ENCODE measurements at regions of chr7 and their contacts with region 1.

Region 1: DNA sequence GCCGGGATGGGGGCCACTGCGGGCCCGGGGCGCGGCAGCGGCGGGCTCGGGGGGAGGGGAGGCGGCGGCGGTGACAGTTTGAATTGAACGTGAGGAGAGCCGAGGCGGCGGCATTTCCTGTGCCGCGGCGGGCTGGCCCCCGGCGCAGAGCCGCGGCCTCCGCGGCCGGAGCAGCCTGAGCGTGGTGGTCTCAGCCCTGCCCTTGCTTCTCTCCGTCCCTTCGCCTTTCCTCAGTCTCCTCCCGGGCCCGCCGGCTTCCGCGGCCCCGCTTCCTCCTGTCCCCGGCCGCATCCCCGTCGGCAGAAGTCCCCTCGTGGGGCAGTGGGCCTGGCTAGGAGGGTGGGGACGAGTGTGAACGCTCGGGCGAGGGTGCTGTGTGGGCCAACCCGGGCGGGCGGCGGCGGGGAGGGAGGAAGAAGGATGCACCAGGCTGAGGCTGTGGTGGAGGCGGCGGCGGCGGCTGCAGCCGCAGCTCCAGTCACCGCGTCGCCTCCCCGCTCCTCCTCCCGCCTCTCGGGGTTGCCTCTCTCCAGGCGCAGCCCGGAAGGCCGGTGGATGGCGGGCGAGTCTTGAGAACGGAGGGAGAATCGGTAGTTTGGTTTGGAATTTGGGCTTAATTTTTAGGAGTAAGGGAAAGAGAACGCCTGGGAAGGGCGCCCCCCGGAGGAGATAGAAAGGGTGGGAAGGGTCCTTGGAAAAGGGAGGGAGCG is 690 bp downstream of the SEPTIN7 start:
- DNase-seq: peak; percentile 75 to 85
- ATAC-seq: peak; percentile 40 to 56 (median 44)
- H3K4me3 ChIP-seq: peak overlapping the region; percentile 79
- H3K27ac ChIP-seq: peak overlapping the region; percentile 92
- H3K4me1 ChIP-seq: peaks cover 35% of the 10 kb centered on the region
- H3K27me3 ChIP-seq: no peaks in the 10 kb centered on the region
- CTCF ChIP-seq: peak; percentile 45

Region 2: DNA sequence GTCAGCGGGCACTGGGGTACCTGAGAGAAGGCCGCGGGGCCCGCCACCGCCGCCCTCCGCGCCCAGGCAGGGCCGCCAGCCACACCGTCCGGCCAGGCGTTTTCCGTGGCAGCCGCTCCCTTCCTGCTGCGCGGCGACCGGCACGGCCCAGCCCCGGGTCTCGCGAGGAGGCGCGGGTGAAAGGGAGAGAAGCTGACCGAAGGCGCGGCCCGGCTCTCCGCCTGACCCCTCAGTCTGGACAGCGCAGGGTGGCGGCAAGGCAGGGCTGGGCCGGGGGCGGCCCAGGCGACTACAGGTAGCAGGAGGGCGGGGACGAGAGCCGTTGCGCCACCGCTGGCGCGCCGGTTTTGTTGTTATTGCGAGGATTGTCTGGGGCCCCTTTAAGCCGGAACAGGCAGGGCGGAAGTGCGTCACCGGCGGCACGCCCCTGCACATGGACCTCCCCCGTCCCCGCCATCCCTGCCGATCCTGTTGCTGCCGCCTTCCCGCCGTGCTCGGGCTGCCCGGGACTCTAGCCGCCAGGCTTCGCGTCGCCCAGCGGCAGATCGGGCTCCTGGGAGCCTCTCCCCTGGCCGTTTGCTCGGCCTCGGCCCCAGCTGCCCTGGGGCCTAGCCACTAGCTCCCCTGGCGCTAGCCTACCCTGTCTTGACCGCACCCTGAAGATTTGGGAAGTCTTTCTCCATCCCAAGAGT is 106.6 kb before region 1 on chr7 and contains the start of gene HERPUD2:
- intact Hi-C with region 1: no loop called
- DNase-seq: peak; percentile 92 to 96
- ATAC-seq: peak; percentile 96 to 97 (median 97)
- H3K4me3 ChIP-seq: peak within 1 kb of the TSS; percentile 96
- H3K27ac ChIP-seq: peak within 1 kb of the TSS; percentile 96
- H3K4me1 ChIP-seq: peaks cover 32% of the 10 kb centered on the region
- H3K27me3 ChIP-seq: no peaks in the 10 kb centered on the region
- CTCF ChIP-seq: no peak
- total RNA-seq, gene HERPUD2: 12.5 to 21.5 (median 16.4) TPM

Region 3: GRCh38 chr7:35707422-35707821 is 94.1 kb before region 1 on chr7:
- intact Hi-C with region 1: loop called in 1 of 2 experiments (anchors 2 kb)
- DNase-seq: no peak
- ATAC-seq: no peak
- H3K4me3 ChIP-seq: no peak overlapping the region
- H3K27ac ChIP-seq: no peak overlapping the region
- H3K4me1 ChIP-seq: peaks cover 6% of the 10 kb centered on the region
- H3K27me3 ChIP-seq: no peaks in the 10 kb centered on the region
- CTCF ChIP-seq: no peak

Region 4: DNA sequence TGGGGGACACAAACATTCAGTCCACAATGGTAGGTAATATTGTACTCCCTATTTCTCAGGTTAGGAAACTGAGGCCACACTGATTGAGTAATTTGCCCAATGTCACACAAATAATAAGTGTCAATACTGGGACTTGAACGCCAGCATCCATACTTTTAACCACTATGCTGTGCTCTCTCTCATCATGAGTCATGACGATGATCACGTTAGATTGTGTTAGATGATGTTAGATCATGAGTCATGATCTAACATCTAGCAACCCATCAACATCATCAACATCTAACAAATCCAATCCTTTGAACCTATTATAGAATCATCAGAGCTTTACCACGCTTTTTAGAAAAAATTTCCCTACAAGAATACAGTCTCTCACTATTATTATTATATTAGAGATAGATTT is 78.5 kb before region 1 on chr7:
- intact Hi-C with region 1: loop called in 1 of 2 experiments (anchors 5 kb)
- DNase-seq: no peak
- ATAC-seq: no peak
- H3K4me3 ChIP-seq: no peak overlapping the region
- H3K27ac ChIP-seq: no peak overlapping the region
- H3K4me1 ChIP-seq: peaks cover 38% of the 10 kb centered on the region
- H3K27me3 ChIP-seq: no peaks in the 10 kb centered on the region
- CTCF ChIP-seq: no peak

Region 5: DNA sequence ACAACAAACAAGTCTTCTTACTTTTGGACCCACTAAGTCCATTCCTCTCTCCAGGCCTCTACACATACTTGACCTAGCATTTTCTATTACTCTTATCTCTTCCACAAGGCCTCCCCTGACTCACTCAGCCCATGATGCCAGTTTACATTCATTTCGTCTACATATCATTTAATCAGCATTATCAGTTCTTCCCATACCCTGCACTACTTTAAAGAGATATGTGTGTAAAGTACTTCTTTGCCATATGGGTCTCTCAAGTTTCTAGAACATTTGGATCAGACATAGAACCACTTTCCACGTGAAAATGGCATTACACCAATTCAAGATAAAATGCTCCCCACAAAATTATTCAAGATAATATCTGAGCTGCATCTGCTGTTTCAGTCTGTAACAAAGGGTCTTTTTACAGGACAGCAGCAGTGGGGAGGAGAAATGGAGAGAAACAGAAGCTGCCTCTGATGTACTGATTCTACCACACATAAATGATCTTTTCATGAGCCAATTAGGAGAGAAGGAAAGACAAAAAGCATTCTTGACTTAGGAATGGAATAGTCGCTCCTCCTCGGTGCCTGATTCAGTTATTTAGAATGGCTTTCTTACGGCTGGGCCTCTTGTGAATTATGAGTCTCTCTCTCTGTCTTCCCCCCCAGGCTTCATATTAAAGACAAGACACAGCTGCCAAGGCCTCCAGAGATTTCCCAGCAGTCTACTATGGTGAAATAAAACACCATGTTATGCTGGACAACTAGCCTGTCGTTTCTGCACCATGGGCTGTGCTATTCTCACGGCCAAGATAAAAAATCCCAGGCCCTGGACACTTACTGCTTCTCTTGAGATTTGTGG is 47.6 kb before region 1 on chr7:
- intact Hi-C with region 1: loop called in 1 of 2 experiments (anchors 2 kb)
- DNase-seq: peak; percentile 26 to 55
- ATAC-seq: peak; percentile 78 to 92 (median 90)
- H3K4me3 ChIP-seq: peak overlapping the region; percentile 6
- H3K27ac ChIP-seq: peak overlapping the region; percentile 80
- H3K4me1 ChIP-seq: peaks cover 44% of the 10 kb centered on the region
- H3K27me3 ChIP-seq: no peaks in the 10 kb centered on the region
- CTCF ChIP-seq: no peak

Region 6: GRCh38 chr7:35869810-35870209 is 68.3 kb after region 1 on chr7:
- intact Hi-C with region 1: loop called in 1 of 2 experiments (anchors 5 kb)
- DNase-seq: no peak
- ATAC-seq: no peak
- H3K4me3 ChIP-seq: no peak overlapping the region
- H3K27ac ChIP-seq: no peak overlapping the region
- H3K4me1 ChIP-seq: peaks cover 45% of the 10 kb centered on the region
- H3K27me3 ChIP-seq: no peaks in the 10 kb centered on the region
- CTCF ChIP-seq: no peak

Region 7: GRCh38 chr7:35906191-35906908 is 104.8 kb after region 1 on chr7:
- intact Hi-C with region 1: loop called in 1 of 2 experiments (anchors 5 kb)
- DNase-seq: peak in 1 of 2 donors; percentile 27
- ATAC-seq: peak; percentile 87 to 96 (median 92)
- H3K4me3 ChIP-seq: no peak overlapping the region
- H3K27ac ChIP-seq: peak overlapping the region; percentile 7
- H3K4me1 ChIP-seq: peaks cover 4% of the 10 kb centered on the region
- H3K27me3 ChIP-seq: no peaks in the 10 kb centered on the region
- CTCF ChIP-seq: peak; percentile 93

Measured in psoas muscle (tissue), 8 donors.